OCI-LY7 (cell line): ENCODE measurements at regions of chr7 and their contacts with region 1.

Region 1: GRCh38 chr7:1065263-1066260 is 21.2 kb downstream of the GPR146 start:
- DNase-seq: peak; percentile 80
- H3K4me3 ChIP-seq: peak overlapping the region; percentile 38
- H3K27ac ChIP-seq: no peak overlapping the region
- H3K4me1 ChIP-seq: peaks cover 51% of the 10 kb centered on the region
- CTCF ChIP-seq: peak; percentile 88

Region 2: GRCh38 chr7:1020849-1021251 is 44.7 kb before region 1 on chr7:
- CTCF ChIA-PET with region 1: interaction called, 7 read pairs
- POLR2A ChIA-PET with region 1: interaction called, 3 read pairs
- intact Hi-C with region 1: loop called (anchors 1 kb)
- DNase-seq: peak; percentile 64
- H3K4me3 ChIP-seq: no peak overlapping the region
- H3K27ac ChIP-seq: no peak overlapping the region
- H3K4me1 ChIP-seq: peaks cover 65% of the 10 kb centered on the region
- CTCF ChIP-seq: peak; percentile 74

Region 3: DNA sequence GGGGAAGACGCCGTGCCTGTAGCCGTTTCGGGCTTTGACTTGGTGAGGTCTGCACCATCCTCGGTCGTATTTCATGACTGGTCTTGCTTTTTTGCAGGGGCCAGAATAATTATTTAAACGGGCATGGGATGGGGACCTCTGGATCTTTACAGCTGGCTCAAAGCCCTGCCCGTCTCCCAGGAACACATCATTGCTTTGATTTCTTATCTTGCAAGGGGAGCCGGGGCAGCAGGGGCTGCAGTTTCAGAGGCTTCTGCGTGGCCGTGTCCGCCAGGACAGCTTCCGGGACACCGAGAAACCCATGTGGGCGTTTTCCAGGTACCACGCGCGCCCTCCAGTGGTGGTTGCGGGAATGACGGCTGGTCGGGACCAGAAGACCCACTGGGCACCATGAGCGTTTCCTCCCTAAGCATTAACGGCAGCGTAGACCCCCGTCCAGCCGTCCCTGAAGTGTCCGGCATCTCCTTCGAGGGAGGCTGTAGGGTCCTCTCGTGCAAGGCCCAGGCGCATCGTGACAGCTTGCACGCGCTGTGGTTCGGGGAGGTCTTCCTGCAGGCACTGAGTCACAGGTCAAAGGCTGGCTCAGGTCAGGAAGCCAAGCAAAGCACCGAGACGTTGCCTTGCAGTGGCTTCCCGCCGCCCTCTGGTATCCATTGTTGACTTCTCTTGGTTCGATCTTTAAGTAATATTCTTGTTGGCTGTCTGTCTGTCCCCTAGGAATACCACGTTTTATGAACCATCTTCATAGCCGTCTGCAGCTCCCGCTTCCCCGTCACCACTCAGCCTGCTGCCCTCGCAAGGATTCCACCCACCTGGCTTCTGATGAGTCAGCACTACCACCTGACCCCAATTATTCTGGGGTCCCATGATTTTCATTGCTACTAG is 110.6 kb after region 1 on chr7:
- CTCF ChIA-PET with region 1: no interaction called
- POLR2A ChIA-PET with region 1: no interaction called
- intact Hi-C with region 1: loop called (anchors 2 kb)
- DNase-seq: peak; percentile 83
- H3K4me3 ChIP-seq: peak overlapping the region; percentile 33
- H3K27ac ChIP-seq: no peak overlapping the region
- H3K4me1 ChIP-seq: peaks cover 12% of the 10 kb centered on the region
- CTCF ChIP-seq: peak; percentile 91